ENCODE measurements at regions of chr19 and their contacts with region 1.

Region 1: DNA sequence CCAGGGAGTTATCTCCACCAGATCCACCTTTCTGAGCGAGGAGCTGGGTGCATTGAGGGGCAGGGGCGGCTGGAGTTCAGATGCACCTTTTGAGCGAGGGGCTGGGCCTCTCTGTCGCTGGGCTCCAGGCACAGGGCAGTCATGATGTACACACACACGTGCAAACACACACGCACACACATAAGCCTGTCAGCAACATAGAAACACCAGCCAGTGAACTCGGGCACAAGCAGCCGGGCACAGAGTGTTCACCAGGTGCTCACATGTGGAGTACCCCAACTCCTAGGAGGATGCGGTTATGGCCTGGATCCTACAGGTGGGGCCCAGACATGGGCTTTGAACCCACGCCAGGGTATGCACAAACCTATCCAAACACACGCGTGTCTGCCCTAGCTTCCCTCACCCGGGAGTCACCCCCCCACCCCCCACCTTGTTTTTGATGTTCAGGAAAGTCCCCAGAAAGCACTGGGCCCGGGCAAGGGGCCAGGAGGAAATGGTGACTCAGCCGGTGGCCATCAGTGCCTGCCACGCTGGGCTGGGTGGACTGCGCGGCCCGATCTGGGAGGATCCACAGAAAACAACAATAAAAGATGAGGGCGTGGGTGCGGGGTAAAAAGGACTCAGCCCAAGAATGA is 13.3 kb downstream of the ARRDC2 start:
- DNase-seq: no peak
- ATAC-seq: peak; percentile 50
- H3K4me3 ChIP-seq: peak overlapping the region; percentile 66; the same call in 1 of the 2 replicates
- H3K27ac ChIP-seq: peak overlapping the region; percentile 48
- H3K4me1 ChIP-seq: peaks cover 17% of the 10 kb centered on the region
- H3K27me3 ChIP-seq: no peaks in the 10 kb centered on the region
- CTCF ChIP-seq: no peak
- EP300 ChIP-seq: no peak
- POLR2A ChIP-seq: no peak; the same call in 1 of the 2 replicates
- RAD21 ChIP-seq: no peak

Region 2: GRCh38 chr19:18007044-18007916 is 14.0 kb before region 1 on chr19:
- CTCF ChIA-PET with region 1: interaction called, 10 read pairs
- POLR2A ChIA-PET with region 1: interaction called, 3 read pairs
- RAD21 ChIA-PET with region 1: interaction called, 6 read pairs
- SMC1A ChIA-PET with region 1: interaction called, 4 read pairs
- in situ Hi-C with region 1: no loop called
- intact Hi-C with region 1: no loop called
- DNase-seq: no peak
- ATAC-seq: peak; percentile 95
- H3K4me3 ChIP-seq: peak overlapping the region; percentile 45
- H3K27ac ChIP-seq: no peak overlapping the region
- H3K4me1 ChIP-seq: peaks cover 22% of the 10 kb centered on the region
- H3K27me3 ChIP-seq: no peaks in the 10 kb centered on the region
- CTCF ChIP-seq: peak; percentile 95 to 99 (median 98); a peak in 5 of 6 replicates
- EP300 ChIP-seq: no peak
- POLR2A ChIP-seq: no peak; the same call in 1 of the 2 replicates
- RAD21 ChIP-seq: peak; percentile 89

Region 3: GRCh38 chr19:18044825-18045304 is 23.6 kb after region 1 on chr19:
- CTCF ChIA-PET with region 1: interaction called, 13 read pairs
- POLR2A ChIA-PET with region 1: interaction called, 16 read pairs
- RAD21 ChIA-PET with region 1: interaction called, 12 read pairs
- SMC1A ChIA-PET with region 1: interaction called, 12 read pairs
- in situ Hi-C with region 1: no loop called
- intact Hi-C with region 1: no loop called
- DNase-seq: peak; percentile 90
- ATAC-seq: peak; percentile 98
- H3K4me3 ChIP-seq: peak overlapping the region; percentile 34; the same call in 1 of the 2 replicates
- H3K27ac ChIP-seq: no peak overlapping the region
- H3K4me1 ChIP-seq: peaks cover 15% of the 10 kb centered on the region
- H3K27me3 ChIP-seq: peaks cover 0 to 3% of the 10 kb centered on the region in 2 experiments; a peak in 2 of 4 replicates
- CTCF ChIP-seq: 0 out of 6 replicates have a peak, but pooled peaks of 1 of the 3 experiments have one; percentile 4
- EP300 ChIP-seq: peak; percentile 86 to 87
- POLR2A ChIP-seq: no peak
- RAD21 ChIP-seq: no peak

Region 4: DNA sequence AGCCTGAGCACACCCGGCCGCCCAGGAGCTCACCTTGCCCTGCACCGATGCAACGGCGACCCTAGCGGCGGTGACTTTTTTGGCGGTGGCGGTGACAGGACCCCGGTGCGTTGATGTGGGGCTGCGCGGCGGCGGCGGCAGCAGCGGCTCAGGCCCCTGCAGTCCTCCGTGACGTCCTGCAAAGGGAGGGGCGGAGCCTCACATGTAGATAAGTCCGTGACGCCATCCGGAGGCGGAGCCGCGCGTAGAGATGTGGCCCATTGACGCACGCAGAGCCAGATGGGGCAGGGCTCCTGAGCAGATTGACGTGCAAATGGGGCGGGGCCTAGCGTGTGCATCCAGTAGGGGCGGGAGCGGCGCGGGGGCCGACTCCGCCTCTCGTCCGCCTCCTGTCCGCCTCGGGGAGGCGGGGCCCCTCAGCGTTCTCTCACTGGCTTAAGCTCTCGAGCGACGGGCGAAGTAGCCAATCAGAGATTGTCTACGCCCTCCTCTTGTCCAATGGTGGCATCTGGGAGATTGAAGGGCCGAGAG is 182.7 kb after region 1 on chr19 and contains the start of gene RAB3A:
- CTCF ChIA-PET with region 1: no interaction called
- POLR2A ChIA-PET with region 1: no interaction called
- RAD21 ChIA-PET with region 1: no interaction called
- SMC1A ChIA-PET with region 1: no interaction called
- in situ Hi-C with region 1: no loop called
- intact Hi-C with region 1: no loop called
- DNase-seq: peak; percentile 99
- ATAC-seq: peak; percentile 97
- H3K4me3 ChIP-seq: peak within 1 kb of the TSS; percentile 86
- H3K27ac ChIP-seq: peak within 1 kb of the TSS; percentile 68
- H3K4me1 ChIP-seq: peaks cover 6% of the 10 kb centered on the region
- H3K27me3 ChIP-seq: no peaks in the 10 kb centered on the region
- CTCF ChIP-seq: no peak
- EP300 ChIP-seq: no peak
- POLR2A ChIP-seq: peak; percentile 47; the same call in 1 of the 2 replicates
- RAD21 ChIP-seq: no peak
- polyA plus RNA-seq, gene RAB3A: 0.07 TPM in 1 of 2 experiments, not detected in the other

Region 5: DNA sequence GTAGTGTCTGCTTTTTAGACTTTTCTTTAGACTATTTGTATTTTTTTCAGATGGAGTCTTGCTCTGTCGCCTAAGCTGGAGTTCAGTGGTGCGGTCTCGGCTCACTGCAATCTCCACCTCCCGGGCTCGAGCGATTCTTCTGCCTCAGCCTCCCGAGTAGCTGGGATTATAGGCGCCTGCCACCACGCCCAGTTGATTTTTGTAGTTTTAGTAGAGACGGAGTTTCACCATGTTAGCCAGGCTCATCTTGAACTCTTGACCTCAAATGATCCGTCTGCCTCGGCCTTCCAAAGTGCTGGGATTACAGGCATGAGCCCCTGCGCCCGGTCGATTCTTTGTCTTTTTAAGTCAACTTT is 551.0 kb after region 1 on chr19:
- CTCF ChIA-PET with region 1: no interaction called
- POLR2A ChIA-PET with region 1: no interaction called
- RAD21 ChIA-PET with region 1: no interaction called
- SMC1A ChIA-PET with region 1: no interaction called
- in situ Hi-C with region 1: no loop called
- intact Hi-C with region 1: no loop called
- DNase-seq: no peak
- ATAC-seq: peak; percentile 2; the same call in 2 of the 3 replicates
- H3K4me3 ChIP-seq: peak overlapping the region; percentile 95
- H3K27ac ChIP-seq: peak overlapping the region; percentile 76
- H3K4me1 ChIP-seq: peaks cover 11% of the 10 kb centered on the region; the same call in 1 of the 2 replicates
- H3K27me3 ChIP-seq: no peaks in the 10 kb centered on the region
- CTCF ChIP-seq: no peak
- EP300 ChIP-seq: no peak
- POLR2A ChIP-seq: no peak
- RAD21 ChIP-seq: no peak

Measured in GM12878 (cell line).